CD4-positive, alpha-beta T cell (primary cell): ENCODE measurements at regions of chr19 and their contacts with region 1.

Region 1: GRCh38 chr19:680287-681028 is 4.3 kb downstream of the FSTL3 start:
- DNase-seq: peak; percentile 99 to 100 (median 100)
- ATAC-seq: peak; percentile 77
- H3K4me3 ChIP-seq: peak overlapping the region; percentile 52
- H3K4me3 Mint-ChIP-seq: peak overlapping the region; percentile 97
- H3K27ac ChIP-seq: peak overlapping the region; percentile 66 to 82
- H3K27ac Mint-ChIP-seq: peak overlapping the region; percentile 88
- H3K4me1 ChIP-seq: peaks cover 40% of the 10 kb centered on the region
- H3K4me1 Mint-ChIP-seq: peaks cover under 1% of the 10 kb centered on the region
- H3K27me3 ChIP-seq: peaks cover 10 to 11% of the 10 kb centered on the region in 2 experiments
- H3K27me3 Mint-ChIP-seq: peaks cover 6% of the 10 kb centered on the region
- CTCF ChIP-seq: no peak

Region 2: GRCh38 chr19:572140-572742 is 108.2 kb before region 1 on chr19 and contains the start of gene BSG:
- CTCF ChIA-PET with region 1: no interaction called
- POLR2A ChIA-PET with region 1: no interaction called
- intact Hi-C with region 1: loop called in 1 of 2 experiments (anchors 5 kb)
- DNase-seq: peak; percentile 97 to 100 (median 98)
- ATAC-seq: peak; percentile 83
- H3K4me3 ChIP-seq: peak within 1 kb of the TSS; percentile 94
- H3K4me3 Mint-ChIP-seq: peak within 1 kb of the TSS; percentile 99
- H3K27ac ChIP-seq: peak within 1 kb of the TSS; percentile 69 to 87
- H3K27ac Mint-ChIP-seq: peak within 1 kb of the TSS; percentile 95
- H3K4me1 ChIP-seq: peaks cover 60% of the 10 kb centered on the region
- H3K4me1 Mint-ChIP-seq: peaks cover 40% of the 10 kb centered on the region
- H3K27me3 ChIP-seq: no peaks in the 10 kb centered on the region
- H3K27me3 Mint-ChIP-seq: no peaks in the 10 kb centered on the region
- CTCF ChIP-seq: no peak
- total RNA-seq, gene BSG: 68.7 to 71.6 TPM

Region 3: DNA sequence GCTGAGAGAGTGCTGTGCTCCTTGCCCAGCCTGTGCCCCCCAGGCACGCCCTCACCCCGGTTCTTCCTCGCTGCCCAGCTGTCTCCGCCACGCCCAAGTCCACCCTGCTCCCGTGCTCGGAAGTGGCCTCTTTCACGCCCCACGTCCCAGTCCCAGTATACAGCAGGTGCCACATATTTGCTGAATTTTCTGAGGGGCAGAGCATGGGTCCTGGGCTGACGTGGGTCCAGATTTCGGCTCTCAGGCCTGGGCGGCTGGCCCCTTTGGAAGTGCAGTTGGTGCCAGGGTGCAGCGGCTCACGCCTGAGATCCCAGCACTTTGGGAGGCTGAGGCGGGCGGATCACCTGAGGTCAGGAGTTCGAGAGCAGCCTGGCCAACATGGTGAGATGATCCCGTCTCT is 87.4 kb before region 1 on chr19:
- CTCF ChIA-PET with region 1: no interaction called
- POLR2A ChIA-PET with region 1: no interaction called
- intact Hi-C with region 1: no loop called
- DNase-seq: no peak
- ATAC-seq: no peak
- H3K4me3 ChIP-seq: no peak overlapping the region
- H3K4me3 Mint-ChIP-seq: peak overlapping the region; percentile 20
- H3K27ac ChIP-seq: no peak overlapping the region
- H3K27ac Mint-ChIP-seq: no peak overlapping the region
- H3K4me1 ChIP-seq: peaks cover 28% of the 10 kb centered on the region
- H3K4me1 Mint-ChIP-seq: peaks cover 2% of the 10 kb centered on the region
- H3K27me3 ChIP-seq: peaks cover 22 to 29% of the 10 kb centered on the region in 2 experiments
- H3K27me3 Mint-ChIP-seq: peaks cover 22% of the 10 kb centered on the region
- CTCF ChIP-seq: no peak

Region 4: GRCh38 chr19:610801-611505 is 69.5 kb before region 1 on chr19:
- CTCF ChIA-PET with region 1: no interaction called
- POLR2A ChIA-PET with region 1: no interaction called
- intact Hi-C with region 1: loop called in 1 of 2 experiments (anchors 2 kb)
- DNase-seq: peak; percentile 33 to 90 (median 56)
- ATAC-seq: peak; percentile 71
- H3K4me3 ChIP-seq: peak overlapping the region; percentile 65
- H3K4me3 Mint-ChIP-seq: peak overlapping the region; percentile 95
- H3K27ac ChIP-seq: peak overlapping the region; percentile 29 to 67
- H3K27ac Mint-ChIP-seq: peak overlapping the region; percentile 85
- H3K4me1 ChIP-seq: peaks cover 43% of the 10 kb centered on the region
- H3K4me1 Mint-ChIP-seq: peaks cover 25% of the 10 kb centered on the region
- H3K27me3 ChIP-seq: no peaks in the 10 kb centered on the region
- H3K27me3 Mint-ChIP-seq: peaks cover 3% of the 10 kb centered on the region
- CTCF ChIP-seq: no peak

Region 5: DNA sequence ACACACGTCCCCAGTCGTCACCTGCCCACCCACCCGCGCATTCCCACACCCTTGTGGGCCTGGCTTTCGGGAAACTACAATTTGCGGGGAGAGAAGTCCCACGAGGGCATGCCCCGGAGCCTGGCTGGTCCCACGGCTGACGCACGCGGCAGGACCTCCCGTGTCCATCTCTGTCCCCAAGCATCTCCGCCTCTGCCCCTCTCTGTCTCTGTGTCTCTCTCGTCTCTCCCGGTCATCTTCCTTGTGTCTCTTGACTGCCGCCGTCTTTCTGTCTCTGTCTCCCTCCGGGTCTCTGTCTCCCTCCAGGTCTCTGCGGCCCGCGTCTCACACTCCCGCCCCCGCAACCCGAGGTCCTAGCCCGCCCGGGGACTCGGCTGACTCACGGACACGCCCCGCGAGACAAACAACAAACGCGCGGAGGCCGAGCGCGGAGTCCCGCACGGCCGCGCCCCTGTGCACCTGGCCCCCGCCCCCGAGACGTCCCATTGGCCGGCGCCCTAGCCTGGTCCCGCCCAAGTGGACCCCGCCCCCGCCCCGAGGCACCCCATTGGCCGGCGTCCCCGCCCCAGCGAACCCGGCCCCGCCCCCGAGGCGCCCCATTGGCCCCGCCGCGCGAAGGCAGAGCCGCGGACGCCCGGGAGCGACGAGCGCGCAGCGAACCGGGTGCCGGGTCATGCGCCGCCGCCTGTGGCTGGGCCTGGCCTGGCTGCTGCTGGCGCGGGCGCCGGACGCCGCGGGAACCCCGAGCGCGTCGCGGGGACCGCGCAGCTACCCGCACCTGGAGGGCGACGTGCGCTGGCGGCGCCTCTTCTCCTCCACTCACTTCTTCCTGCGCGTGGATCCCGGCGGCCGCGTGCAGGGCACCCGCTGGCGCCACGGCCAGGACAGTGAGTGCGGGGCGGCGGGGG is 41.0 kb before region 1 on chr19 and contains the start of gene FGF22:
- CTCF ChIA-PET with region 1: no interaction called
- POLR2A ChIA-PET with region 1: no interaction called
- intact Hi-C with region 1: loop called in 1 of 2 experiments (anchors 1 kb)
- DNase-seq: peak; percentile 93 to 99 (median 96)
- ATAC-seq: peak; percentile 96
- H3K4me3 ChIP-seq: peak within 1 kb of the TSS; percentile 53
- H3K4me3 Mint-ChIP-seq: peak within 1 kb of the TSS; percentile 84
- H3K27ac ChIP-seq: no peak within 1 kb of the TSS
- H3K27ac Mint-ChIP-seq: peak within 1 kb of the TSS; percentile 88
- H3K4me1 ChIP-seq: peaks cover 25% of the 10 kb centered on the region
- H3K4me1 Mint-ChIP-seq: peaks cover 6% of the 10 kb centered on the region
- H3K27me3 ChIP-seq: no peaks in the 10 kb centered on the region
- H3K27me3 Mint-ChIP-seq: no peaks in the 10 kb centered on the region
- CTCF ChIP-seq: no peak
- total RNA-seq, gene FGF22: 0.42 to 0.49 TPM

Region 6: GRCh38 chr19:771332-771785 is 90.9 kb after region 1 on chr19:
- CTCF ChIA-PET with region 1: no interaction called
- POLR2A ChIA-PET with region 1: no interaction called
- intact Hi-C with region 1: no loop called
- DNase-seq: peak in 5 of 14 experiments; percentile 13 to 69 (median 31)
- ATAC-seq: peak; percentile 56
- H3K4me3 ChIP-seq: no peak overlapping the region
- H3K4me3 Mint-ChIP-seq: no peak overlapping the region
- H3K27ac ChIP-seq: no peak overlapping the region
- H3K27ac Mint-ChIP-seq: no peak overlapping the region
- H3K4me1 ChIP-seq: no peaks in the 10 kb centered on the region
- H3K4me1 Mint-ChIP-seq: peaks cover 4% of the 10 kb centered on the region
- H3K27me3 ChIP-seq: no peaks in the 10 kb centered on the region
- H3K27me3 Mint-ChIP-seq: peaks cover 9% of the 10 kb centered on the region
- CTCF ChIP-seq: no peak

Region 7: GRCh38 chr19:796692-797527 is 116.5 kb after region 1 on chr19 and contains the start of gene PTBP1:
- CTCF ChIA-PET with region 1: no interaction called
- POLR2A ChIA-PET with region 1: interaction called, 5 read pairs
- intact Hi-C with region 1: loop called in 1 of 2 experiments (anchors 1 kb)
- DNase-seq: peak; percentile 97 to 100 (median 99)
- ATAC-seq: peak; percentile 83
- H3K4me3 ChIP-seq: peak within 1 kb of the TSS; percentile 87
- H3K4me3 Mint-ChIP-seq: peak within 1 kb of the TSS; percentile 89
- H3K27ac ChIP-seq: peak within 1 kb of the TSS; percentile 67 to 72
- H3K27ac Mint-ChIP-seq: peak within 1 kb of the TSS; percentile 87
- H3K4me1 ChIP-seq: peaks cover 48% of the 10 kb centered on the region
- H3K4me1 Mint-ChIP-seq: peaks cover 36% of the 10 kb centered on the region
- H3K27me3 ChIP-seq: no peaks in the 10 kb centered on the region
- H3K27me3 Mint-ChIP-seq: no peaks in the 10 kb centered on the region
- CTCF ChIP-seq: no peak
- total RNA-seq, gene PTBP1: 246 to 252 TPM